ENCODE measurements at regions of chr17 and their contacts with region 1.

Region 1: DNA sequence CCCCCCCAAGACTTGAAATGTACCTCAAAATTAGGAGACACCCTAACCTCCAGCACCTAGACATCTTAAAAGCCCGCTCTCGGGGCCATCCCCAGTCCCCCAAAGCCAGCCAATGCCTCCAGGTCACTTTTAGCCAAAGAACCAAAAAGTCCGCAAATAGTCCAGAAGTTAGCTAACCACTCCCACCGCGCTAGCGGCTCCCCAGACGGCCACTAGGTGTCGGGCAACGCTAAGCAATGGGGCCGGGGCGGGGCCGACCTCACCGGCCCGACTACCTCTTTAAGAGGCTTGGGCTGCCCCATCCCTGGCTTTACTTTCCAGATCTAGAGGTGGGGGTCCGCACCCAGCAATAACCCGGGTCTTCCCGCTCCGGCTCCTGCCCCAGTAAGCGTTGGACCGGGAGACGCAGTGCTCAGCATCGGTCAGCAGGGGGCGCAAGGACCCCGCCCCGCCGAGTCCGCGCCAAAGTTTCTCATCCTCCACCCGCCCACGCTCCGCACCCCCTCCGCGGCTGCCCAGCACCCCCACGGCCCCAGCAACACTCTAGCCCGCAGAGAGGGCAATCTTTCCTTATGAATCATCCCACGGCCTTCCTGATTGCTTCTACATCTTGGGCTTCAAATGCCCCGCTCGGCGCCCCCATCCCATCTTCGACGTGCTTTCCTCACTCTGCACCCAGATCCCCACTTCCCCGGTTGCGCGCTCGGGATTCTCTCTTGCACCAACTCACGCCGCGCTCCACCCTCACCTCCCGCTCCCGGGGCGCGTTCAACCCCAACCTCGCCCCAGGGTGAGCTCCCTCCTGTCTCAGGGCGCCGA is 765 bp downstream of the COL1A1 start:
- DNase-seq: peak; percentile 89
- ATAC-seq: peak; percentile 85
- H3K4me3 Mint-ChIP-seq: peak overlapping the region; percentile 61
- H3K27ac Mint-ChIP-seq: no peak overlapping the region
- H3K4me1 Mint-ChIP-seq: peaks cover 13% of the 10 kb centered on the region
- H3K27me3 Mint-ChIP-seq: peaks cover 58% of the 10 kb centered on the region

Region 2: GRCh38 chr17:50064258-50065001 is 136.2 kb before region 1 on chr17:
- CTCF ChIA-PET with region 1: no interaction called
- DNase-seq: no peak
- ATAC-seq: no peak
- H3K4me3 Mint-ChIP-seq: no peak overlapping the region
- H3K27ac Mint-ChIP-seq: no peak overlapping the region
- H3K4me1 Mint-ChIP-seq: no peaks in the 10 kb centered on the region
- H3K27me3 Mint-ChIP-seq: no peaks in the 10 kb centered on the region

Region 3: DNA sequence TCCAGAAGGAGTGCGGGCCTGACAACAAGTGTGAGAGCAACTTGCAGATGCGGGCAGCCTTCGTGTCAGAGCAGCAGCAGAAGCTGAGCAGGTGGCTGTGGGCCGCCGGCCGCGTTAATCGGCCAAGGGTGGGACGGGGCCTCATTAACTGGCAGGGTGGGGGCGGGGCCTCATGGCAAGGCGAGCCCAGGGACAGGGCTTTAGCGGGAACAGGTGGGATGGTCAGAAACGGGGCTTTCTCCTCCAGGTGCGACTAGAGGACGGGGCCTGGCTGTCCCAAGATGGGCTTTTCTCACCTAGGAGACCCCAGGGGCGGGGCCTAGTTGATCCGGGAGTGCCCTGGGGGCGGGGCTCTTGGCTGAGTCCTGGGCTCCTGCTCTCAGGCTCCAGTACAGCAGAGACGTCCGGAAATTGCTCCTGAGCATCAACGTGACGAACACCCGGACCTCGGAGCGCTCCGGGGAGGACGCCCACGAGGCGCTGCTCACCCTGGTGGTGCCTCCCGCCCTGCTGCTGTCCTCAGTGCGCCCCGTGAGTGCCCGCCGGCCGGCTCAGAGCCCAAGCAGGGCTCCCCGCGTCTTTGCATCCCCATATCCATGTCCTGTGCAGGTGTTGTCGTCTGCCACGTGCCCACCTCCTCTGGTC is 124.0 kb before region 1 on chr17:
- CTCF ChIA-PET with region 1: no interaction called
- DNase-seq: no peak
- ATAC-seq: no peak
- H3K4me3 Mint-ChIP-seq: no peak overlapping the region
- H3K27ac Mint-ChIP-seq: no peak overlapping the region
- H3K4me1 Mint-ChIP-seq: peaks cover 2% of the 10 kb centered on the region
- H3K27me3 Mint-ChIP-seq: no peaks in the 10 kb centered on the region

Region 4: GRCh38 chr17:50151041-50151936 is 49.4 kb before region 1 on chr17:
- CTCF ChIA-PET with region 1: interaction called, 18 read pairs
- DNase-seq: peak; percentile 96
- ATAC-seq: peak; percentile 81
- H3K4me3 Mint-ChIP-seq: peak overlapping the region; percentile 80
- H3K27ac Mint-ChIP-seq: peak overlapping the region; percentile 96
- H3K4me1 Mint-ChIP-seq: peaks cover 43% of the 10 kb centered on the region
- H3K27me3 Mint-ChIP-seq: no peaks in the 10 kb centered on the region

Region 5: DNA sequence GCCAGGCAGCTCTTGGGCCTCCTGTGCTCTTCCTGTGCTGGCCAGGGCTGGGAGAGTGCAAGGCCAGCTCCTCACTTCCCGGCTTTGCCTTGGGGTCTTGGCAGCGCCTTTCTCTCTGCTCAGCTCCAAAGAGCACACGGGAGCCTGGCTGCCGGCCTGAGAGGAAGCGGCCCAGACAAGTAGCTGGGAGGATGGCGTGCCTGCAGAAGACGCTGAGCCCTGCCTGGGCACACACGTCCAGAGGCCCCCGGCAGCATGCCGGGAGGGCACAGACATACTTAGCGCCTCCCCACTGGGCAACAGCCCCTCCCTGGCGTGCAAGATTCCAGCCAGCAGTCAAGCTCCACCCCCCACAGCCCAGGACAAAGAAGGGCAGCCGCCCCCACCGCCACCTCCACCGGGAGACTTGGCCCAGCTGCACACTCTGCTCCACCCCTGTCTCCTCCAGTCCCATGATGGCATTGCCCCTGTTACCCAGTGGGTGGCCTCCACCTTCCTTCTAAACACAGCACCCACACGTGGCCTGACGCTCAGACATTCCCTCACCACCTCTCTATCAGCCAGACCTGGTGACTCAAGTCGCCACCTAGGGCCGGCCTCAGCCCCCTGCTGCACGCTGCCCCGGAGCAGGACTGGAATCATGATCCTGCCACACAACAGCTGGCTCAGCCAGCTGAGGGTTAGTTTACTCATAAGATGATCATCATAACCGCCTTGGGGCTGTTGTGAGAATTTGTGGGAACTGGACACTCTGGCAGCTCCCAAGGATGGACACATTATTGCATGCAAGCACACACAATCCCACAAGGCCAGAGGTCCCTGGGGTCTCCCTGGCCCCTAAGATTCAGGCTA is 22.5 kb before region 1 on chr17:
- CTCF ChIA-PET with region 1: interaction called, 77 read pairs
- DNase-seq: peak; percentile 55
- ATAC-seq: peak; percentile 79
- H3K4me3 Mint-ChIP-seq: no peak overlapping the region
- H3K27ac Mint-ChIP-seq: no peak overlapping the region
- H3K4me1 Mint-ChIP-seq: peaks cover 9% of the 10 kb centered on the region
- H3K27me3 Mint-ChIP-seq: peaks cover 2% of the 10 kb centered on the region

Region 6: GRCh38 chr17:50218771-50219315 is 18.2 kb after region 1 on chr17:
- CTCF ChIA-PET with region 1: interaction called, 64 read pairs
- DNase-seq: no peak
- ATAC-seq: no peak
- H3K4me3 Mint-ChIP-seq: no peak overlapping the region
- H3K27ac Mint-ChIP-seq: no peak overlapping the region
- H3K4me1 Mint-ChIP-seq: peaks cover 9% of the 10 kb centered on the region
- H3K27me3 Mint-ChIP-seq: peaks cover 52% of the 10 kb centered on the region

Region 7: GRCh38 chr17:50297407-50297865 is 96.8 kb after region 1 on chr17:
- CTCF ChIA-PET with region 1: interaction called, 199 read pairs
- DNase-seq: peak; percentile 85
- ATAC-seq: peak; percentile 94
- H3K4me3 Mint-ChIP-seq: no peak overlapping the region
- H3K27ac Mint-ChIP-seq: no peak overlapping the region
- H3K4me1 Mint-ChIP-seq: peaks cover 12% of the 10 kb centered on the region
- H3K27me3 Mint-ChIP-seq: peaks cover 5% of the 10 kb centered on the region

Region 8: DNA sequence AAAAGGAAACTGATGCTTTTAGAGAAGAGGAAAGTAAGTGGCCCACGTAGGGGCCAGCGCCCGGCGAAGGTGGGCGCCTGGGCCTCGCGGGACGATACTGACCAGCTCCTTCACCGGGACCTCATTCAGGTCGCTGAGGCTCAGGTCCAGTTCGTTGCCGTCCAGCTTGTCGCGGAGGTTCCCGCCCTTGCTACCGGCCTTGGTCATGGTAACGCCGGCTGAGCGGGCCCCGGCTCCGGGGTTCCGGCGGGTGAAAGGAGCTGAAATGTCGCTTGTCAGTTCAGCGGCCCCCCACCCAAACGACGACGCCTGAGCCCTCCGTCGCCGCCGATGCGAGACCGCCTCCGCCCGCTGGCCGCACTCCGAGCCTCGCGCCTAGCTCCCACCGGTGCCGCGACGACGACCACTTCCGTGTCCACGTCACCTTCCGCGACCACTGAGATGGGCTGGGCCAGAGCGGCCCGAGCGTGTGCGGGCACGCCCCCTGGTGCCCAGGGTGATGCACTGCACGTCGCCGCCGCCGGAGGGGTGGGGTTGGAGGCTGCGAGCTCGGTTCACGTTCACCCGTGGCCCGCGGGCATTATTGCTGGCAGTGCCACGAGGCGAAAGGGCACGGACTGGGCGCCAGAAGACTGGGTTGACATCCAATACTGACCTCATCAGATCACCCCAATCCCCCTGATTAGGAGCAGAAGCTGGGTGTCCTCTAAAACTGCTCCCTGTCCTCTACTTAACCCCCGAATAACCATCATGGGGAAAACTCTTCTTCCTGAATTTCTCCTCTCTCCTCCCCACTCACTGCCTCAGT is 196.6 kb after region 1 on chr17 and contains the start of gene LRRC59:
- CTCF ChIA-PET with region 1: interaction called, 14 read pairs
- DNase-seq: peak; percentile 95
- ATAC-seq: peak; percentile 97
- H3K4me3 Mint-ChIP-seq: peak within 1 kb of the TSS; percentile 90
- H3K27ac Mint-ChIP-seq: peak within 1 kb of the TSS; percentile 89
- H3K4me1 Mint-ChIP-seq: peaks cover 33% of the 10 kb centered on the region
- H3K27me3 Mint-ChIP-seq: no peaks in the 10 kb centered on the region
- total RNA-seq, gene LRRC59: 71.5 to 82.6 TPM

Measured in activated CD8-positive, alpha-beta memory T cell treated with anti-CD3 and anti-CD28 coated beads, Interleukin-2, amount 10 ng/mL, durations not matched to agents 7 days and 5 days (primary cell).